Testis (tissue), 5 donors: ENCODE measurements at regions of chr11 and their contacts with region 1.

Region 1: GRCh38 chr11:60899046-60899936 is 7.1 kb downstream of the PRPF19 start:
- DNase-seq: peak; percentile 57
- H3K4me3 ChIP-seq: no peak overlapping the region
- H3K27ac ChIP-seq: no peak overlapping the region
- H3K4me1 ChIP-seq: no peaks in the 10 kb centered on the region
- H3K27me3 ChIP-seq: no peaks in the 10 kb centered on the region
- CTCF ChIP-seq: peak; percentile 85 to 93 (median 92)
- POLR2A ChIP-seq: no peak

Region 2: DNA sequence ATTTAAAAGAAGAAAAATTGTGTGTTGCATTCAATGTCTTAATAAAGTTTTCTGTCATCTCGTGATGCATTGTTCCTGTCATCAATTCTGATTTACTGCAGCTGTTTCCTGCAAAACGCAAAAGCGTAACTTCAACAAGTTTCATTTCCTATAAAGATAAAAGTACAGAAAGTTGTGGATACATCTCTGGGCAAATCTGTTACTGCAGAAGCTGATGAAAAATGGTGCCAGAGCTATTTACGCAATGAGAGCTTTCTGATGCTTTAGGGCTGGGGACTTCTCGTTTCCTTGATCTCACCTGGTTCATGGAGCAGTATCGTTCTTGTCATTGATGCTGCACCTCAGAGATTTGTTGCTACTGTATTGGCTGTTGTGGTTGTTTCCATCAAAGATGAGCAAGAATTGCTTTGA is 422.3 kb before region 1 on chr11:
- intact Hi-C with region 1: no loop called
- DNase-seq: no peak
- H3K4me3 ChIP-seq: no peak overlapping the region
- H3K27ac ChIP-seq: no peak overlapping the region
- H3K4me1 ChIP-seq: no peaks in the 10 kb centered on the region
- H3K27me3 ChIP-seq: no peaks in the 10 kb centered on the region
- CTCF ChIP-seq: no peak
- POLR2A ChIP-seq: no peak

Region 3: DNA sequence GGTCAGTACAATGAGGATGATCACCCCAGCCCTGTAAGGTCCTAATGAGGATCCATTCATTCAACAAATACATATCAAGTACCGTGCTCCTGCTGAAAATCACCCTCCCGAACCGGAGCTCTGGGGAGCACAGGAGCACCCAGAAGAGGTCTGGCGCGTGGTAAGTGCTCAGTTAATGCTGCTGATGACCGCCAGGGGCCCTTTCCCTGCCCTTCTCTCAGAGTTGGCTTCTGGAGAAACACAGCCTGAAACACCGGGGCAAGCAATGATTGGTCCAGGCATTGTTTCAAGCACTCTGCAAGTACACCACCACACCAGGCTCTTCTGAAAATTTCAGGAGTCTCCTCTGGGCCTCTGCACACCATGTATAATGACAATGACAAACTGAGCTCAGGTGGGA is 61.2 kb before region 1 on chr11:
- intact Hi-C with region 1: loop called (anchors 5 kb)
- DNase-seq: no peak
- H3K4me3 ChIP-seq: no peak overlapping the region
- H3K27ac ChIP-seq: no peak overlapping the region
- H3K4me1 ChIP-seq: peaks cover 20% of the 10 kb centered on the region
- H3K27me3 ChIP-seq: no peaks in the 10 kb centered on the region
- CTCF ChIP-seq: no peak
- POLR2A ChIP-seq: no peak